Heart left ventricle (tissue), 16 donors: ENCODE measurements at regions of chr16 and their contacts with region 1.

Region 1: DNA sequence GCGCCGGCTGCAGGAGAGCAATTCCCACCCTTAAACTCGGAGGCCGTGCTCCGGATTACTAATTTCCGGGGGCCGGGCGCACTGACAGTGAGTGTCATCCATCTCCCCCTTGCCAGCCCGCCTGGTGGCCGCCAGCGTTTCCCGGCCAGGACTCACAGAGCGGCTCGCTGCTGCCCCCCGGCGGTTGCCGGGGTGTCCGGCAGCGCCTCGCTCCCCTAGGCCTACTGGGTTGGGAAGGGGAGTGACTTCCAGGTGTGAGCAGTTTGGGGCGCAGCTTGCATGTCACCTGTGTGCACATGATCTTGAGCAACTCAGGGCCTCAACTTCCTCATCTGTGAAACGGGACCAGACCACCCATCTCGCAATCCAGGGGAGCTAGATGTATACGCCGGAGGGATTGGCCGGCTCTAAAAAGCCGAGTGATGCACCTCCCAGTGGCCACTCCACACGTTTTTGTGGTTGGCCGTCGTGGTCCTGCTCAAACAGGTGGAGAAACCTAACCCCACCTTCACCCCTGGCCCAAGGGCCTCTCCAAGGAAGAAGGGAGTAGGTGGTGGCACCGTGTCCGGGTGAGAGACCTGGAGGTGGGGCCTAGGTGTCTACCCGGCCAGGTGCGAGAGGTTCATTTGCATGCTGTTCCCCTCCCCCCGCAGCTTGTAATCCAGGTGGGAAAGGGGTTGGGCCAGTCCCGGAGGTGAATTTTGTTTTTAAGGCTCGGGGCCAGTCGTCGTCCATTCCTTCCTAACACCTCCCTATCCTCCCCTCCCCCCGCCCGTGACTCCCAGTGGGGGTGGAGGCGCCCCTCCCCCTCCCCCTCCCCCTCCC is 2.4 kb upstream of the GSE1 start:
- DNase-seq: peak; percentile 84 to 93 (median 87)
- ATAC-seq: peak; percentile 23 to 51 (median 39)
- H3K4me3 ChIP-seq: peak overlapping the region in 11 of 12 donors; percentile 53 to 82 (median 71)
- H3K27ac ChIP-seq: peak overlapping the region in 11 of 12 donors; percentile 85 to 98 (median 94)
- H3K4me1 ChIP-seq: peaks cover 9 to 74% (median 52%) of the 10 kb centered on the region in 12 donors
- H3K27me3 ChIP-seq: no peaks in the 10 kb centered on the region
- CTCF ChIP-seq: peak; percentile 97 to 100 (median 99)
- POLR2A ChIP-seq: no peak

Region 2: DNA sequence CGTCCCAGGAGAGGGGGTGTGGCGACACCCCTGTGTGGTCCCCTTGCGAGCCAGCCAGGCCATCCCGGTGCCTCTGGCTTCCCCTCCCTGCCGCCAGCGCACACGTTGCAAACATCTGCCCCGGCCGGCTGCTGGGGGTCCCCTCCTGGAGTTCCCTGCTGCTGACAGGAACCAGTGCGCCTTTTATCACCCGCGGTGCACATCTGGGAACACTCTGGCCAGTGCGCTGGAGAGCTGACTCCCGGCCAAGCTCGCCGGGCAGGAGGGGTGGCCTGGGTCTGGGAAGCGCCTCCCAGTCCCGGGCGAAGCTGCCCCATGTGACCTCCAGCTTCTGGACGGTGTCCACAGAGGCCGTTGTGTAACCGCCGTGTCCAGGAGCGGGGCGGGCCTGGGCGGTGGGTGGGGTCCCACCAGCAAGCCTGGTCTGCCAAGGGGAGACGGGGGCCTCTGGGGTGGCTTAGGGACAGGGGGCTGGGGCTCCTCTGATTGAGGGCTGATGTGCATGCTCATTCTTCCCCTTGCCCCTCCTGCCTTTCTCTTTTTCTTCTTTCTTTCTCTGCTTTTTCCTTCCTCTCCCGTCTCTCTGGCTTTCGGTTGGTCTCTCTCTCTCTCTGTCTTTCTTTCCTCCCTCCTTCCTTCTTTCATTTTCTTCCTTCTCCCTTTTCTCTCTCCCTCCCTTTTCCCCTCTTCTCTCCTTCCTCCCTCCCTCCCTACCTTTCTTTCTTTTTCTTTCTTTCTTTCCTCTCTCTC is 473.2 kb before region 1 on chr16:
- intact Hi-C with region 1: loop called in 1 of 10 experiments (anchors 10 kb)
- DNase-seq: peak; percentile 95 to 98 (median 95)
- ATAC-seq: peak; percentile 91 to 94 (median 92)
- H3K4me3 ChIP-seq: peak overlapping the region in 10 of 12 donors; percentile 10 to 52 (median 42)
- H3K27ac ChIP-seq: peak overlapping the region; percentile 52 to 92 (median 76)
- H3K4me1 ChIP-seq: peaks cover 3 to 58% (median 39%) of the 10 kb centered on the region in 12 donors
- H3K27me3 ChIP-seq: no peaks in the 10 kb centered on the region
- CTCF ChIP-seq: no peak
- POLR2A ChIP-seq: no peak

Region 3: DNA sequence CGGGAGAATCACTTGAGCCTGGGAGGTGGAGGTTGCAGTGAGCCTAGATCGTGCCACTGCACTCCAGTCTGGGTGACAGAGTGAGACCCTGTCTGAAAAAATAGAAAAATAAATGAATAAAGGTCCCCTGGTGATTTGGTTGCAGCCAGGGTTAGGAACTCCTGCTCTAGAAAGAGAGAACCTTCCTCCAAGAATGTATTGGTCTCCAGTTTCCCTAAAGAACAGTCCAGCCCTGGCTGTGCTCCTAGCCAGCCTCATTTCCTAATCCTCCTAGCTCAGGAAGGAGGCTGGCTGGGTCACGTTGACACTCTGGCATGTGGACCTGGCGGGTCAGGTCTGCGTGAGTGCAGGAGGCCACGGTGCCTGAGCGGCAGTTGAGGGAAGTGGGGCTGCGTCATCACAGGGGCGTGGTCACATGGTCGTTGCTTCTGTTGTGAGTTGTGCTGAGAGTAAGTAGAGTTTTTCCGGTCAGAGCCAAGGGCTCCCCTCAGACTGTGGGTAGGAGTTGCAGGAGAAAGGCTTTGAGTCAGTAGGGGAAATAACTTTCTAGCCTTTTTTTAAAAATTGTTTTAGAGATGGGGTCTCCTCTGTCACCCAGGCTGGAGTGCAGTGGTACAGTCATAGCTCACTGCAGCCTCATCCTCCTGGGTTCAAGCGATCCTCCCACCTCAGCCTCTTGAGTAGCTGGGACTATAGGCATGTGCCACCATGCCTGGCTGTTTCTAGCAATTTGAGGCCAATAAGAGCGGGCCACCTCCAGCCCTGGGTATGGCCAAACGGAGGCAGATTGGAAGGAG is 304.5 kb before region 1 on chr16:
- intact Hi-C with region 1: loop called in 4 of 10 experiments (anchors 10 kb)
- DNase-seq: peak; percentile 79 to 91 (median 86)
- ATAC-seq: peak; percentile 47 to 85 (median 60)
- H3K4me3 ChIP-seq: no peak overlapping the region
- H3K27ac ChIP-seq: peak overlapping the region in 8 of 12 donors; percentile 20 to 71 (median 46)
- H3K4me1 ChIP-seq: peaks cover 7 to 78% (median 45%) of the 10 kb centered on the region in 12 donors
- H3K27me3 ChIP-seq: no peaks in the 10 kb centered on the region
- CTCF ChIP-seq: no peak
- POLR2A ChIP-seq: no peak

Region 4: DNA sequence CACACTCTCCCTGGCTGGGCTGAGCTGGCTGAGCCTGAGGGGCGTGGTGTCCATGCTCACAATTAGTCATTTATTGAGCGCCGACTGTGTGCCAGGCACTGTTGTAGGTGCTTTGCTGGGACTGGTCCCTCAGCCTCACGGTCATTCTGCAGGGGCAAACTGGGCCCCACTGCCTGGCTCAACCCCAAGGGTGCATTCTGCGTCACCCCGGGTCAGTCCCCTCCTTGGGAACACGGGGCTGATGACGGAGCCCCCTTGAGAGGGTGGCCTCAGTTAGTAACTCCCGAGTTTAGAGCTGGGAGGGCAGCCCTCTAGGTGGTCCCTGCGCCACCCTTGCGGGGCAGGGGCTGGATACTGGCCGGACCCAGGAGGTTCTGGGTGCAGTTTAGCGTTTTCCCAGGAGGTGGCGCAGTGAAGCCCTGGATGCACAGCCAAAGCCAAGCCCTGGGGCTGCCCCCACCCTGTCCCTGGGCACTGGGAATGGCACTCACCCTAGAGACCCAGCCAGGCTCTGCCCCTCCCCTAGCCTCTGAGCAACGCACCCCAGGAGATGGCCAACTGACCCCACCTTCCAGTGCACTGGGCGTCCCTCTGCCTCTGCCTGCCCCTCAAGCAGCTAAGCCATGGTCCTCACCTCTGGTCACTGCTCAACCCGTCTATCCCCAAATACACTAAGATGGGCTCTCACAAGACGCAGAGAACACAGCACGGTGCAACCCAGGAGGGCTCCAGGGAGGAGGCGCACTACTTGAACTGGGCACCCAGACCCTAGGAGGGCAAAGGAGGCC is 240.8 kb before region 1 on chr16:
- intact Hi-C with region 1: loop called in 1 of 10 experiments (anchors 5 kb)
- DNase-seq: peak in 1 of 5 donors; percentile 47
- ATAC-seq: peak; percentile 38 to 59 (median 47)
- H3K4me3 ChIP-seq: no peak overlapping the region
- H3K27ac ChIP-seq: peak overlapping the region in 1 of 12 donors; percentile 82
- H3K4me1 ChIP-seq: peaks cover 0 to 28% (median 10%) of the 10 kb centered on the region in 12 donors
- H3K27me3 ChIP-seq: no peaks in the 10 kb centered on the region
- CTCF ChIP-seq: peak; percentile 59 to 83 (median 74)
- POLR2A ChIP-seq: no peak

Region 5: GRCh38 chr16:85420501-85421337 is 190.0 kb before region 1 on chr16:
- intact Hi-C with region 1: loop called (anchors 1 to 10 kb)
- DNase-seq: peak; percentile 44 to 82 (median 54)
- ATAC-seq: peak in 3 of 4 donors; percentile 48 to 71 (median 68)
- H3K4me3 ChIP-seq: no peak overlapping the region
- H3K27ac ChIP-seq: no peak overlapping the region
- H3K4me1 ChIP-seq: peaks cover 0 to 18% (median 3%) of the 10 kb centered on the region in 12 donors
- H3K27me3 ChIP-seq: no peaks in the 10 kb centered on the region
- CTCF ChIP-seq: peak in 11 of 12 donors; percentile 98 to 100 (median 100)
- POLR2A ChIP-seq: peak in 1 of 2 donors; percentile 35

Region 6: DNA sequence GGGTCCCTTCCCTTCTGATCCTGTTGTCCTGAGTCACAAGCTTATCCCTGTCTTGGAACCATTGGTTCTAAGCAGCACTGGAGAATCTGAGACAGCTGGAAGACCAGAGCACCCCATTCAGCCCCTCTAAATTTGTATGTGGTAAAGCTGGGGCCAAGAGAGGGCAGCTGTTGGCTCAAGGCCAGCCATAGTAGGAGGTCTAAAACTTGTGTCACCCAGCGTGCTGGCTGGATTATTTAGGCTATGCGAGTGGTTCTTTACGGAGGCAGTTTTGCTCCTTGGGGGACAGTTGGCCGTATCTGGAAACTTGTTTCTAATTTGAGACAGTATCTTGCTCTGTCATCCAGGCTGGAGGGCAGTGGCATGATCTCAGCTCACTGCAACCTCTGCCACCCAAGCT is 67.2 kb before region 1 on chr16:
- intact Hi-C with region 1: no loop called
- DNase-seq: no peak
- ATAC-seq: no peak
- H3K4me3 ChIP-seq: no peak overlapping the region
- H3K27ac ChIP-seq: no peak overlapping the region
- H3K4me1 ChIP-seq: peaks cover 0 to 16% (median 0%) of the 10 kb centered on the region in 12 donors
- H3K27me3 ChIP-seq: no peaks in the 10 kb centered on the region
- CTCF ChIP-seq: no peak
- POLR2A ChIP-seq: no peak

Region 7: DNA sequence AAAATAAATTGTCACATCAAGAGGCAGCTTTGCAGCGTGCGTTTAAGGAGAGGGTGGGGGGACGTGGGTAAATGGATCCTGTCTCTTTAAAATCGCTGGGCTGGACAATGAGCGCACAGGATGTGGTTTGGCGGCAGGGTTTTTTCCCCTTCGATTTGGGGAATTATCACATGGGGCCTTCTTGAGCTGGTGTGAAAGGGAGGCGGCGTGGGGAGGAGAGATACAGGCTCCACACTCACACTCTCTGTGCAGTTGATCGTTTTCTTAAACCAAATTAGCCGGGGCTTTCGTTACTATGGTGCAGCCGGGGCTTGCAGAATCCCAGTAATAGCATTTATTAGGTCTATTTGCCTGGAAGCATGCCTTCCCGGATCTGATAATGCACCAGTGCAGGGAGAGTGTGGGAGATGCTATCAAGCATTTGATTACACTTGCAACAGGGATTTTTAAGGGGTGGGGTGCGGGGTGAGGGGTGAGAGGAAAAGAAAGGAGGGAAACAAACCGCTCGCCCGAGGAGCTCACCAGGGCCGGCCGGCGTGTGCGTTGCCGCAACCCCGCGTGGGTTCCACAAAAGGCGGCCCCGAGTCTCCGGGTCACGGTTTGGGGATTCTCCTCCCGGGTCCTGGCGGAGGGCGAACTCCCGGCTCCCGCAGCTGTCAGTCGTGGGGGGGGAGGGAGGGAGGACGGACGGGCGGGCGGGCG is 56.5 kb before region 1 on chr16:
- intact Hi-C with region 1: loop called in 9 of 10 experiments (anchors 2 to 5 kb)
- DNase-seq: peak in 4 of 5 donors; percentile 73 to 83 (median 80)
- ATAC-seq: peak; percentile 40 to 64 (median 54)
- H3K4me3 ChIP-seq: peak overlapping the region; percentile 63 to 96 (median 79)
- H3K27ac ChIP-seq: peak overlapping the region; percentile 47 to 99 (median 90)
- H3K4me1 ChIP-seq: peaks cover 0 to 66% (median 31%) of the 10 kb centered on the region in 12 donors
- H3K27me3 ChIP-seq: no peaks in the 10 kb centered on the region
- CTCF ChIP-seq: no peak
- POLR2A ChIP-seq: no peak

Region 8: DNA sequence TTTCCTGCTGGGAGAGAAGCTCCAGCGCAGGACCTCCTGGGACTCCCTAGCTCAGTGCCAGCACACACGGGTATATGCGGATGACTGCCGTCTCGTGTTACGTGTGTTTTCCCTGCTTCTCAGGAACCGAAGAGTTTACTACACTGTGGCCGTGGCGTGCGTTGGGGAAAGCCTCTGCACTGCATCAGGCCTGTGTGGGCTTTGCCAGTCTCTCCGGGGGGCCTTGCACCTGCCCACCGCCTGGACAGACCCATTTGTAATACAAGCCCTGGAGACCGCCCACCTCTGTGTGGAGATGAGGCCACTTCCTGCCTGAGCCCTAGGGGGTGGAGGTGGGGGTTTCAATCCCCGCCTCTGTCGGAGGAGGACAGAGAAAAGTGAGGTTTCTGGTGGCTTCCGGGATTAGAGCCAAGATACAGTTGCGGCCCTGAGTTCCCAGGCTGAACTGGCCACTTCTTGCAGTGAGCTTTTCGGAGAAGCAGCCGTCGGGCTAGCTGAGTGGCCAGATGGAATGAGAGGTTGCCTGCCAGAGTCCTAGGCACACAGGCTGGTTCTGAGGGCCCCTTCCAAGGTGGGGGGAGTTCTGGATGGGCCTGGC is 41.0 kb before region 1 on chr16:
- intact Hi-C with region 1: loop called in 2 of 10 experiments (anchors 5 kb)
- DNase-seq: no peak
- ATAC-seq: no peak
- H3K4me3 ChIP-seq: peak overlapping the region in 1 of 12 donors; percentile 0
- H3K27ac ChIP-seq: peak overlapping the region in 3 of 12 donors; percentile 2 to 76 (median 35)
- H3K4me1 ChIP-seq: peaks cover 4 to 77% (median 26%) of the 10 kb centered on the region in 12 donors
- H3K27me3 ChIP-seq: no peaks in the 10 kb centered on the region
- CTCF ChIP-seq: no peak
- POLR2A ChIP-seq: no peak

Region 9: GRCh38 chr16:85659805-85660495 is 49.2 kb after region 1 on chr16:
- intact Hi-C with region 1: no loop called
- DNase-seq: peak; percentile 66 to 85 (median 73)
- ATAC-seq: peak; percentile 87 to 95 (median 90)
- H3K4me3 ChIP-seq: no peak overlapping the region
- H3K27ac ChIP-seq: peak overlapping the region in 9 of 12 donors; percentile 13 to 67 (median 38)
- H3K4me1 ChIP-seq: peaks cover 0 to 18% (median 9%) of the 10 kb centered on the region in 12 donors
- H3K27me3 ChIP-seq: no peaks in the 10 kb centered on the region
- CTCF ChIP-seq: peak; percentile 86 to 97 (median 90)
- POLR2A ChIP-seq: no peak

Region 10: GRCh38 chr16:85916141-85916890 is 305.6 kb after region 1 on chr16:
- intact Hi-C with region 1: no loop called
- DNase-seq: peak; percentile 55 to 88 (median 69)
- ATAC-seq: peak; percentile 62 to 90 (median 86)
- H3K4me3 ChIP-seq: no peak overlapping the region
- H3K27ac ChIP-seq: no peak overlapping the region
- H3K4me1 ChIP-seq: peaks cover 0 to 54% (median 5%) of the 10 kb centered on the region in 12 donors
- H3K27me3 ChIP-seq: no peaks in the 10 kb centered on the region
- CTCF ChIP-seq: no peak
- POLR2A ChIP-seq: no peak

Region 11: DNA sequence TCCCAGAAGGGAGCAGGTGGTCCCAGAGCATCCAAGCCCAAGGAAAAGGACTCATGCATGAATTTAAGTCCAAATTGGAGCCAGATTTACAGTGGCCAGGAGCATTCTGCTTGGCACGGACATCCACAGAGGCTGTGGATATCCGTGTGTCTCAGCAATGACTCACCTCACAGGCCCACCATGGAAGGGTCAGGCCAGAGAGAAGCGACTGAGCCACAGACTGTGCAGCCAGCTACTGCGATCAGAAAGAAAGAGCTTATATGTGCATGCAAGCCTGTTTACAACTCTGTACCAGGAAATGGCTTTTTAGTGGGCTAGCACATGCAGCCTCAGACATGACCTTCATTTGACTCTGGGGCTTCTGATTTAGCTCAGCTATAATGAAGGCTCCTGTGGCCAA is 1475.4 kb after region 1 on chr16:
- intact Hi-C with region 1: no loop called
- DNase-seq: no peak
- ATAC-seq: no peak
- H3K4me3 ChIP-seq: no peak overlapping the region
- H3K27ac ChIP-seq: no peak overlapping the region
- H3K4me1 ChIP-seq: no peaks in the 10 kb centered on the region
- H3K27me3 ChIP-seq: no peaks in the 10 kb centered on the region
- CTCF ChIP-seq: no peak
- POLR2A ChIP-seq: no peak